BJ (cell line): ENCODE measurements at regions of chr5 and their contacts with region 1.

Region 1: GRCh38 chr5:35003018-35003957 is 44.5 kb downstream of the AGXT2 start:
- DNase-seq: no peak
- H3K4me3 ChIP-seq: no peak overlapping the region
- H3K27me3 ChIP-seq: peaks cover 6% of the 10 kb centered on the region; the same call in 1 of the 2 replicates
- CTCF ChIP-seq: peak; percentile 90

Region 2: GRCh38 chr5:34474573-34475021 is 528.7 kb before region 1 on chr5:
- CTCF ChIA-PET with region 1: interaction called, 31 read pairs
- POLR2A ChIA-PET with region 1: no interaction called
- DNase-seq: no peak
- H3K4me3 ChIP-seq: no peak overlapping the region
- H3K27me3 ChIP-seq: peaks cover 2% of the 10 kb centered on the region; the same call in 1 of the 2 replicates
- CTCF ChIP-seq: peak; percentile 94

Region 3: GRCh38 chr5:34930870-34931269 is 72.4 kb before region 1 on chr5:
- CTCF ChIA-PET with region 1: no interaction called
- POLR2A ChIA-PET with region 1: no interaction called
- DNase-seq: no peak
- H3K4me3 ChIP-seq: peak overlapping the region; percentile 96
- H3K27me3 ChIP-seq: no peaks in the 10 kb centered on the region
- CTCF ChIP-seq: no peak

Region 4: GRCh38 chr5:34957857-34958690 is 45.2 kb before region 1 on chr5:
- CTCF ChIA-PET with region 1: interaction called, 33 read pairs
- POLR2A ChIA-PET with region 1: no interaction called
- DNase-seq: no peak
- H3K4me3 ChIP-seq: no peak overlapping the region
- H3K27me3 ChIP-seq: no peaks in the 10 kb centered on the region
- CTCF ChIP-seq: peak; percentile 70

Region 5: GRCh38 chr5:35016174-35017051 is 13.1 kb after region 1 on chr5:
- CTCF ChIA-PET with region 1: interaction called, 18 read pairs
- POLR2A ChIA-PET with region 1: no interaction called
- DNase-seq: no peak
- H3K4me3 ChIP-seq: no peak overlapping the region
- H3K27me3 ChIP-seq: no peaks in the 10 kb centered on the region
- CTCF ChIP-seq: no peak

Region 6: GRCh38 chr5:35026280-35026840 is 23.1 kb after region 1 on chr5:
- CTCF ChIA-PET with region 1: interaction called, 14 read pairs
- POLR2A ChIA-PET with region 1: interaction called, 3 read pairs
- DNase-seq: no peak
- H3K4me3 ChIP-seq: no peak overlapping the region
- H3K27me3 ChIP-seq: no peaks in the 10 kb centered on the region; the same call in 1 of the 2 replicates
- CTCF ChIP-seq: no peak